ENCODE measurements at regions of chr12 and their contacts with region 1.

Region 1: GRCh38 chr12:10331642-10332239 is 24.1 kb downstream of the KLRD1 start:
- DNase-seq: no peak
- H3K4me3 Mint-ChIP-seq: no peak overlapping the region
- H3K27ac Mint-ChIP-seq: no peak overlapping the region
- H3K4me1 Mint-ChIP-seq: peaks cover 4% of the 10 kb centered on the region
- H3K27me3 Mint-ChIP-seq: peaks cover 14% of the 10 kb centered on the region

Region 2: DNA sequence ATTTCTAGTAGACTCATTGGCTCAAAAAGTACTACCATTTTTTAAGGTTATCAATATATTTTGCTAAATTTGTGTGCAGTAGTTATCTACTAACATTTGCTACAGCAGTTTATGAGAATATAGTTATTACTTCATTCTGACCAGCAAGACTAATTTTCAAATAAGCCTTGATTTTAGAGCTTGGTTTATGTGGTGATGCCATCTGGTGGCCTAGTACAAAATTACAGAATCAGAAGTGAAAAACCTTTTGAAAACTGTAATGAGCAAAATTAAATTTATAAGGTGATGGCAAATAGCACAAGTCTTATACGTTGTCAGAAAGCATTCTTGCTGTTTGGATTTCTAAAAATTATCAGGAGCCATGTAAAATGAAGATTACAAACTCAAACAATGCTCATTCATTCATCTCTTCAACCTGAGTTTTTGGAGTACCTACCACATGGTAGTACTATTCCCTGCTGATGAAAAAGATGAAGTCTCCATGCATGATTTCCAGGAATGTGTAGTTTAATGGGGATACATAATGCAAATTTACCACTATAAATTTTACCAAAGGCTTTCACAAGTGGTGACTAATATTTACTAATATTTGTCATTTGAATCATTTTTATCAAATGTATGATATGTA is 230.7 kb after region 1 on chr12:
- intact Hi-C with region 1: loop called (anchors 2 kb)
- DNase-seq: no peak
- H3K4me3 Mint-ChIP-seq: no peak overlapping the region
- H3K27ac Mint-ChIP-seq: no peak overlapping the region
- H3K4me1 Mint-ChIP-seq: no peaks in the 10 kb centered on the region
- H3K27me3 Mint-ChIP-seq: peaks cover 39% of the 10 kb centered on the region